CD4-positive, alpha-beta T cell (primary cell): ENCODE measurements at regions of chr22 and their contacts with region 1.

Region 1: GRCh38 chr22:28800308-28801077 is at the start of gene XBP1:
- DNase-seq: peak; percentile 77 to 96 (median 86)
- ATAC-seq: peak; percentile 91
- H3K4me3 ChIP-seq: peak within 1 kb of the TSS; percentile 99
- H3K4me3 Mint-ChIP-seq: peak within 1 kb of the TSS; percentile 97
- H3K27ac ChIP-seq: peak within 1 kb of the TSS; percentile 92 to 93
- H3K27ac Mint-ChIP-seq: peak within 1 kb of the TSS; percentile 96
- H3K4me1 ChIP-seq: peaks cover 44% of the 10 kb centered on the region
- H3K4me1 Mint-ChIP-seq: peaks cover 60% of the 10 kb centered on the region
- H3K27me3 ChIP-seq: no peaks in the 10 kb centered on the region
- H3K27me3 Mint-ChIP-seq: no peaks in the 10 kb centered on the region
- CTCF ChIP-seq: no peak
- total RNA-seq, gene XBP1: 180 to 190 TPM

Region 2: GRCh38 chr22:28560046-28560742 is 240.3 kb before region 1 on chr22:
- CTCF ChIA-PET with region 1: no interaction called
- POLR2A ChIA-PET with region 1: no interaction called
- intact Hi-C with region 1: no loop called
- DNase-seq: no peak
- ATAC-seq: no peak
- H3K4me3 ChIP-seq: no peak overlapping the region
- H3K4me3 Mint-ChIP-seq: no peak overlapping the region
- H3K27ac ChIP-seq: no peak overlapping the region
- H3K27ac Mint-ChIP-seq: no peak overlapping the region
- H3K4me1 ChIP-seq: no peaks in the 10 kb centered on the region
- H3K4me1 Mint-ChIP-seq: no peaks in the 10 kb centered on the region
- H3K27me3 ChIP-seq: peaks cover 0 to 14% of the 10 kb centered on the region in 2 experiments
- H3K27me3 Mint-ChIP-seq: peaks cover 39% of the 10 kb centered on the region
- CTCF ChIP-seq: no peak

Region 3: GRCh38 chr22:28772633-28773460 is 27.6 kb before region 1 on chr22 and contains the start of gene CCDC117:
- CTCF ChIA-PET with region 1: interaction called, 3 read pairs
- POLR2A ChIA-PET with region 1: interaction called, 50 read pairs
- intact Hi-C with region 1: loop called in 1 of 2 experiments (anchors 1 kb)
- DNase-seq: peak; percentile 85 to 97 (median 91)
- ATAC-seq: peak; percentile 97
- H3K4me3 ChIP-seq: peak within 1 kb of the TSS; percentile 83
- H3K4me3 Mint-ChIP-seq: peak within 1 kb of the TSS; percentile 95
- H3K27ac ChIP-seq: peak within 1 kb of the TSS; percentile 61 to 73
- H3K27ac Mint-ChIP-seq: peak within 1 kb of the TSS; percentile 88
- H3K4me1 ChIP-seq: peaks cover 34% of the 10 kb centered on the region
- H3K4me1 Mint-ChIP-seq: peaks cover 27% of the 10 kb centered on the region
- H3K27me3 ChIP-seq: no peaks in the 10 kb centered on the region
- H3K27me3 Mint-ChIP-seq: no peaks in the 10 kb centered on the region
- CTCF ChIP-seq: no peak
- total RNA-seq, gene CCDC117: 14.2 to 16.1 TPM

Region 4: DNA sequence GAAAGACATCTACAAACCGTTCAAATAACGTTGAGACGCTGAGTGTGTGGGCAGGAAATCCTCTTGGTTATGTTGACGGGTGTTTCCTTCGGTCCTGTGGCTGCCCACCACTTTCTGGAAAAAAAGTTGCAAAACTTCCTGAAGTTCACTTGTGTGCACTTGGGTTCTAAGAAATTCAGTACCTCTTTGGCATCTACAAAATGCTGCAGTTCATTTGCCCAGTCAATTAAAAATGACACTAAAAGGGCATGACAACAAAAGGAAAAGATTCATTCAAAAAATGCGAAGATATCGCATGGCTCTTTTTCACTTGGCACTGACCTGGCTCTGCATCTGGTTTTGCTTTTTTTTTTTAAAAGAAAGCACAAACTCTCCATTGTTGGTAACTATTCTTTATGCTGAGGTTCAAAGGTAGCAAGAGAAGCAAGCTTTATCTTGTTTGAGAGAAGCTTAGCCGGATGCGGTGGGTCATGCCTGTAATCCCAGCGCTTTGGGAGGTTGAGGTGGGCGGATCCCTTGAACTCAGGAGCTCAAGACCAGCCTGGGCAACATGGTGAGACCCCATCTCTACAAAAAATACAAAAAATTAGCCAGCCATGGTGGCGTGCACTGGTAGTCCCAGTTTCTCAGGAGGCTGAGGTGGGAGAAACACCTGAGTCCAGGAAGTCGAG is 10.5 kb after region 1 on chr22:
- CTCF ChIA-PET with region 1: interaction called, 9 read pairs
- POLR2A ChIA-PET with region 1: interaction called, 161 read pairs
- intact Hi-C with region 1: loop called in 1 of 2 experiments (anchors 1 kb)
- DNase-seq: peak in 6 of 14 experiments; percentile 20 to 85 (median 52)
- ATAC-seq: peak; percentile 68
- H3K4me3 ChIP-seq: peak overlapping the region; percentile 43
- H3K4me3 Mint-ChIP-seq: peak overlapping the region; percentile 69
- H3K27ac ChIP-seq: peak overlapping the region; percentile 48 to 59
- H3K27ac Mint-ChIP-seq: peak overlapping the region; percentile 81
- H3K4me1 ChIP-seq: peaks cover 65% of the 10 kb centered on the region
- H3K4me1 Mint-ChIP-seq: peaks cover 72% of the 10 kb centered on the region
- H3K27me3 ChIP-seq: no peaks in the 10 kb centered on the region
- H3K27me3 Mint-ChIP-seq: no peaks in the 10 kb centered on the region
- CTCF ChIP-seq: no peak

Region 5: DNA sequence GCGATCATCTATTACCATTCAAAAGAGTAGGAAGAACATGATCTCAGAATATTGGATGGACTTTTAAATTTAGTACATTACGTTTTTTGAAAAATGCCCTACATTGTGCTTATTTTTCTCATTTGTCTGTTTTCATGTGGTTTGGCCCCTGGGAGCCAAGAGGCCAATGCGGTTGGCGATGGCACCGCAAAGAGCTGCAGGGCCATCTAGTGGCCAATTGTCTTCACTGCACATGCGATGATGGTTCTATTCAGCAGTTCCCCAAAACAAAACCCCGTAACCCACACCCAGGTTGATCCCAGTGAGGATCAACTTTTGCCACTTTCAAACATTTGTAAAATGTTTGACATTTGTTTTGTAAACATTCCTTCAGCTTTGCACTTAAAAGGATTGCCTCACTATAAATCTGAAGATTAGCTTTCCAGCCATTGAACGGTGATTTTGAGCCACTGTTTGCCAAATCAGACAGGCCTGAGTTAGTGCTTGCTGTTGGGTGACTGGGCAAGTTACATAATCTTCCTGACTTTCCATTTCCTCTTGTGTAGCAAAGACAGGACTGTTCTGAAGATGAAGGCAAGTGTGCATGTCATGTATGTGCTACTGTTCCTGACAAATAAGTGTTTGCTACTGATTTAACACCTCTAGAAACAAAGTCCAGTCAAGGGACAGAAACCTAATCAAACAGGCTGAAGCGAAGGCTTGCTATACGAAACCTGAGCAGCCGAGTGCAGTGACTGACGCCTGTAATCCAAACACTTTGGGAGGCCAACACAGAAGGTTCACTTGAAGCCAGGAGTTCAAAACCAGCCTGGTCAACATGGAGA is 29.1 kb after region 1 on chr22:
- CTCF ChIA-PET with region 1: interaction called, 22 read pairs
- POLR2A ChIA-PET with region 1: interaction called, 25 read pairs
- intact Hi-C with region 1: no loop called
- DNase-seq: peak; percentile 56 to 88 (median 70)
- ATAC-seq: peak; percentile 87
- H3K4me3 ChIP-seq: no peak overlapping the region
- H3K4me3 Mint-ChIP-seq: peak overlapping the region; percentile 22
- H3K27ac ChIP-seq: no peak overlapping the region
- H3K27ac Mint-ChIP-seq: no peak overlapping the region
- H3K4me1 ChIP-seq: peaks cover 8% of the 10 kb centered on the region
- H3K4me1 Mint-ChIP-seq: peaks cover 17% of the 10 kb centered on the region
- H3K27me3 ChIP-seq: no peaks in the 10 kb centered on the region
- H3K27me3 Mint-ChIP-seq: no peaks in the 10 kb centered on the region
- CTCF ChIP-seq: peak; percentile 100

Region 6: DNA sequence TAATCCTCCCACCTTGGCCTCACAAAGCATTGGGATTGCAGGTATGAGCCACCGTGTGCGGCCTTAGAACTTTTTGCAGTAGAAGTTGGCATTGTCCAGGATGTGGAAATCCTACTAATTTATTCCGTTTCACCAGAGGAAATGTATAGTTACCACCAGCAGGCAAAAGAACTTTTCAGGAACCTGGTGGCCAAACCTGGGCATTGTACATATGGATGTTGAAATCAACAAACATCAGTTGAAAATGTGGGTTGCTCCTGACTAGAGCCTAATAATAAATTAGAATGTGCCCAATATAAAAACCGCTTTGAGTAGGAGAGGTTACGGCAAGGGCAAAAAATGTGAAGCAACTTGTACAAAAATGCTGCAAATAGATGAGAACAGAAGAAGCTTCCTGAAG is 40.6 kb after region 1 on chr22:
- CTCF ChIA-PET with region 1: no interaction called
- POLR2A ChIA-PET with region 1: no interaction called
- intact Hi-C with region 1: no loop called
- DNase-seq: no peak
- ATAC-seq: no peak
- H3K4me3 ChIP-seq: no peak overlapping the region
- H3K4me3 Mint-ChIP-seq: no peak overlapping the region
- H3K27ac ChIP-seq: no peak overlapping the region
- H3K27ac Mint-ChIP-seq: no peak overlapping the region
- H3K4me1 ChIP-seq: no peaks in the 10 kb centered on the region
- H3K4me1 Mint-ChIP-seq: no peaks in the 10 kb centered on the region
- H3K27me3 ChIP-seq: no peaks in the 10 kb centered on the region
- H3K27me3 Mint-ChIP-seq: no peaks in the 10 kb centered on the region
- CTCF ChIP-seq: no peak